ENCODE measurements at regions of chr14 and their contacts with region 1.

Region 1: GRCh38 chr14:68369281-68370056 is 423.4 kb downstream of the ZFP36L1 start:
- DNase-seq: peak; percentile 85
- ATAC-seq: peak; percentile 83
- H3K4me3 ChIP-seq: peak overlapping the region; percentile 24; the same call in 1 of the 2 replicates
- H3K27ac ChIP-seq: peak overlapping the region; percentile 94
- H3K4me1 ChIP-seq: peaks cover 55% of the 10 kb centered on the region
- H3K27me3 ChIP-seq: no peaks in the 10 kb centered on the region
- CTCF ChIP-seq: no peak
- EP300 ChIP-seq: no peak
- POLR2A ChIP-seq: no peak
- RAD21 ChIP-seq: 0 out of 2 replicates have a peak, but pooled peaks have one; percentile 20

Region 2: DNA sequence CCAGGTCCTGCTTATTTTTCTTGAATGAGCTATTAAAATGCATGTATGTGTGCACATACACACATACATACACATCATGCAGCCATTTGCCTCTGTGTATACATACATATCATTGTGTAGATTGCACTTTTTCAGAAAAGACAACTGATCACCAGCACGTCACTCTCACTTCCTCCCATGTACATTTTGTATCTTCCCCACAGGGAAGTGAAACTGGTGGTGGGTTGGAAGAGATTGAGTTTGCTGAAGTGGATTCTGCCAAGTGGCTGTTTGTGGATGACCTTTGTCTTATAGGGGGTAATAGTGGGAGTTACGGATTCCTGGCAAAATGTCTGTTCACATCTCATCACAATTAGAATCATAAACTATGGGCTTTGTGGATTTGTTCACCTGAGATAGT is 101.3 kb before region 1 on chr14:
- CTCF ChIA-PET with region 1: no interaction called
- POLR2A ChIA-PET with region 1: interaction called, 3 read pairs
- RAD21 ChIA-PET with region 1: interaction called, 13 read pairs
- SMC1A ChIA-PET with region 1: interaction called, 51 read pairs
- in situ Hi-C with region 1: no loop called
- intact Hi-C with region 1: no loop called
- DNase-seq: peak; percentile 93
- ATAC-seq: peak; percentile 84
- H3K4me3 ChIP-seq: no peak overlapping the region
- H3K27ac ChIP-seq: peak overlapping the region; percentile 84
- H3K4me1 ChIP-seq: peaks cover 73% of the 10 kb centered on the region
- H3K27me3 ChIP-seq: no peaks in the 10 kb centered on the region
- CTCF ChIP-seq: no peak
- EP300 ChIP-seq: peak; percentile 93 to 100; a peak in 3 of 4 replicates
- POLR2A ChIP-seq: no peak
- RAD21 ChIP-seq: peak; percentile 22

Region 3: DNA sequence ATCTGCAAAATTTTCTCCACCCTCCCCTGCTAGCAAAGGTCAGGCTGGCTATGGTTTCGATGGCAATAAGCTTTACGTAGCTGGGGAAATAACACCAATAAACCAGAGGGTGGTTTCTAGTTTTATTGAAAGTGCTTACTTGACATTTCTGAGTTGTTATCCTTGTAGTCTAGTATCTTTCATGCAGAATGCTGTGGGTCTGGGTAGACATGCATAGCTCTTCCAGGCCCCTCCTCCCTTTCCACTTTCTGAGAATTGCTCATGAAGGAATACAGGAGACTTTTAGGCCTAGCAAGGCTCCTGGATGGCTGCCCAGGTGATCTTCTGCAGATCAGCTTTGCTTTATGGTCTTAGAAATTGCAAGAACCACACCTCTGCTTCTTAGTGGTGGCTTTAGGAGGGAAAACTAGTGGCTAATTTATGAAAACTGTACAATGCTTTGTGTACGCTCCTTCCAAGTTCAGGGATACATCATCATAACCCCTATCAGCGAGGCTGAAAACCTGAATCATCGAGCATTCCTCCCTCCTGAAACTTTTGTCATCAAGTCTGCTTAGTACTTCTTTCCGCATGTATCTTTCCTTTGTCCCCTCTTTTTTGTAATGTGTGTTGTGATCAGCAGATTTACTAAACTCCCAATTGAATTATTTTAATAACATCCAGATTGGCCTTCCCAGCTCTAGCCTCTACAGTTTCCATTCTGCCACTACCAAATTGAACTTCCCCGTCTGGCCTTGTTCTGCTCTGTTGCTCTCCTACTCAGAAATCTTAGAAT is 76.8 kb before region 1 on chr14:
- CTCF ChIA-PET with region 1: interaction called, 3 read pairs
- POLR2A ChIA-PET with region 1: interaction called, 6 read pairs
- RAD21 ChIA-PET with region 1: interaction called, 46 read pairs
- SMC1A ChIA-PET with region 1: interaction called, 15 read pairs
- in situ Hi-C with region 1: no loop called
- intact Hi-C with region 1: no loop called
- DNase-seq: no peak
- ATAC-seq: peak; percentile 43; the same call in 2 of the 3 replicates
- H3K4me3 ChIP-seq: no peak overlapping the region
- H3K27ac ChIP-seq: peak overlapping the region; percentile 76
- H3K4me1 ChIP-seq: peaks cover 49% of the 10 kb centered on the region
- H3K27me3 ChIP-seq: no peaks in the 10 kb centered on the region
- CTCF ChIP-seq: no peak
- EP300 ChIP-seq: no peak
- POLR2A ChIP-seq: no peak
- RAD21 ChIP-seq: no peak

Region 4: DNA sequence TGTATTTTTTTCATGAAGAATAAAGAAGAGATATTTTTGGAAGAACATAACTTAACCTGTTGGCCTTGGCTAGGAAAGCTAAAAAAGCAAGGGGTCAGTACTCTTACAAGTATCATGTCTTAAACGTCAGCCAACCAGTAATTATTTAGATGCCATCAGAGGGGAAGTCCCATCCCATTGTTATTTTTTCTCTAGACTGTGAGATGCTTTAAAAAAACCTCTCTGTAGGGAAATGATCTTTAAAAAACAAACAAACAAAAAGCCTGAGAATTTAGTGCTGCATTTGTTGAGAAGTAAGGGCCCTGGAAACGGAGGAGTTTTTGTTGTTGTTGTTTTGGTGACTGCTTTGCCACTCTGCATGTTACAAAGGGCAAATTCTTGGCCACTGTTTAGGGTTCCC is 50.6 kb before region 1 on chr14:
- CTCF ChIA-PET with region 1: interaction called, 17 read pairs
- POLR2A ChIA-PET with region 1: interaction called, 17 read pairs
- RAD21 ChIA-PET with region 1: interaction called, 39 read pairs
- SMC1A ChIA-PET with region 1: interaction called, 151 read pairs
- in situ Hi-C with region 1: no loop called
- intact Hi-C with region 1: no loop called
- DNase-seq: no peak
- ATAC-seq: peak; percentile 49
- H3K4me3 ChIP-seq: no peak overlapping the region
- H3K27ac ChIP-seq: no peak overlapping the region
- H3K4me1 ChIP-seq: peaks cover 54% of the 10 kb centered on the region
- H3K27me3 ChIP-seq: no peaks in the 10 kb centered on the region
- CTCF ChIP-seq: no peak; a peak in 1 of 6 replicates
- EP300 ChIP-seq: peak in 1 of 2 experiments; percentile 23; a peak in 1 of 4 replicates
- POLR2A ChIP-seq: no peak
- RAD21 ChIP-seq: no peak

Region 5: DNA sequence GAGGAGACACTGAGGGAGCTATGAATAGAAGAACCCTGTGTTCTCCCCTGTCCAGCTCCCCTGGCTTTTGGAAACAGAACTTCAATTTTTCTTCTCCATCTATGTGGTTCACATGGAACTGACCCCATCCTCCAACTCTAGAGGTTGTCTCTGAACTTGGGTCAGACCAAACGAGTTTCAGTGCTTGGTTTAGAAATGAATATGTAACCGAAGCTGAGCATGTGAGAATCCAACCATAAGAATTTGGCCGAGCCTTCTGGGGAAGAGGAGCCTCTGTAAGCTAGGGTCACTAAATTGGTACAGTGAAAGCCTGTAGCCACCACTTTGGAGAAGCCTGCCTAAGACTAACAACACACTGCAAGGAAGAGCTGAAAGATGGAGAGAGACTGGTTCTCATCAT is 41.0 kb before region 1 on chr14:
- CTCF ChIA-PET with region 1: interaction called, 4 read pairs
- POLR2A ChIA-PET with region 1: interaction called, 4 read pairs
- RAD21 ChIA-PET with region 1: interaction called, 9 read pairs
- SMC1A ChIA-PET with region 1: interaction called, 151 read pairs
- in situ Hi-C with region 1: no loop called
- intact Hi-C with region 1: loop called (anchors 5 kb)
- DNase-seq: no peak
- ATAC-seq: peak; percentile 85
- H3K4me3 ChIP-seq: no peak overlapping the region
- H3K27ac ChIP-seq: peak overlapping the region; percentile 64
- H3K4me1 ChIP-seq: peaks cover 36% of the 10 kb centered on the region
- H3K27me3 ChIP-seq: no peaks in the 10 kb centered on the region
- CTCF ChIP-seq: no peak
- EP300 ChIP-seq: peak in 1 of 2 experiments; percentile 44; a peak in 1 of 4 replicates
- POLR2A ChIP-seq: no peak
- RAD21 ChIP-seq: peak; percentile 30; the same call in 1 of the 2 replicates

Region 6: DNA sequence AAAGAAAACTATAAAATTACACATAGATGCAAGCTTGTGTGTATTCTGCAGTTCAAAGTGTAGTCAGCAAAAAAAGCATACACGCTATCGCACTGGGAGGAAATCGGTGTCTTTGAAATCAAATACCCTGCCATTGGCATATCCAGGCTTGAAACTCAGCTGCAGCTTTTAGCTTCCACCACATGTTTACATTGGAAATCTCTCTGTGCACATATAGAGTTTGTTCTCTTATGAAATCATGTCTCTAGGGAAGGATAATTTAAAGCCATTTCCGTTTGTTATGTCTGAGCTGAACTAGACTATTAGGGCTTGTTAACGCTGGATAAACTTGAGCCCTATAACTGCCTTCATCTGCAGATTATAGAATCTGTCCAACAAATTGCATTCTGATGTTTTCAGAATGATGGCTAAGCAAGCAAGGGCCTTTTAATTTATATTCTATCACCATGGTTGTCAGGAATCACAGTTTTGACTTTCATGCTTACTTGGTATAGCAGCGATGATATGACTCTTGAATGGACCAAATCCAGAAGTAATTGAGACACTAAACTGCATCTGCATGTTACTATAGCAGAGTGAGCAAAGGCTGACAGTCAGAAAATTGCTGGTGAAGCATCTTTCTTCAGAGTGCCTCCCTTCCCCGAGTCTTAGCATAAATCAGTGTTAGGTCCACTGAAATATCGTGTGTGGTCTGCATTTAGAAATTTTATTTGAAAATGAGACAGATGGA is 19.4 kb before region 1 on chr14:
- CTCF ChIA-PET with region 1: no interaction called
- POLR2A ChIA-PET with region 1: interaction called, 3 read pairs
- RAD21 ChIA-PET with region 1: no interaction called
- SMC1A ChIA-PET with region 1: interaction called, 17 read pairs
- in situ Hi-C with region 1: no loop called
- intact Hi-C with region 1: no loop called
- DNase-seq: no peak
- ATAC-seq: no peak
- H3K4me3 ChIP-seq: no peak overlapping the region
- H3K27ac ChIP-seq: no peak overlapping the region
- H3K4me1 ChIP-seq: no peaks in the 10 kb centered on the region
- H3K27me3 ChIP-seq: no peaks in the 10 kb centered on the region
- CTCF ChIP-seq: no peak
- EP300 ChIP-seq: no peak
- POLR2A ChIP-seq: no peak
- RAD21 ChIP-seq: no peak

Region 7: GRCh38 chr14:68458840-68459469 is 89.5 kb after region 1 on chr14:
- CTCF ChIA-PET with region 1: no interaction called
- POLR2A ChIA-PET with region 1: no interaction called
- RAD21 ChIA-PET with region 1: no interaction called
- SMC1A ChIA-PET with region 1: no interaction called
- in situ Hi-C with region 1: no loop called
- intact Hi-C with region 1: no loop called
- DNase-seq: no peak
- ATAC-seq: no peak
- H3K4me3 ChIP-seq: no peak overlapping the region
- H3K27ac ChIP-seq: no peak overlapping the region
- H3K4me1 ChIP-seq: no peaks in the 10 kb centered on the region
- H3K27me3 ChIP-seq: no peaks in the 10 kb centered on the region
- CTCF ChIP-seq: no peak
- EP300 ChIP-seq: no peak
- POLR2A ChIP-seq: no peak
- RAD21 ChIP-seq: no peak